ENCODE measurements at regions of chr3 and their contacts with region 1.

Region 1: DNA sequence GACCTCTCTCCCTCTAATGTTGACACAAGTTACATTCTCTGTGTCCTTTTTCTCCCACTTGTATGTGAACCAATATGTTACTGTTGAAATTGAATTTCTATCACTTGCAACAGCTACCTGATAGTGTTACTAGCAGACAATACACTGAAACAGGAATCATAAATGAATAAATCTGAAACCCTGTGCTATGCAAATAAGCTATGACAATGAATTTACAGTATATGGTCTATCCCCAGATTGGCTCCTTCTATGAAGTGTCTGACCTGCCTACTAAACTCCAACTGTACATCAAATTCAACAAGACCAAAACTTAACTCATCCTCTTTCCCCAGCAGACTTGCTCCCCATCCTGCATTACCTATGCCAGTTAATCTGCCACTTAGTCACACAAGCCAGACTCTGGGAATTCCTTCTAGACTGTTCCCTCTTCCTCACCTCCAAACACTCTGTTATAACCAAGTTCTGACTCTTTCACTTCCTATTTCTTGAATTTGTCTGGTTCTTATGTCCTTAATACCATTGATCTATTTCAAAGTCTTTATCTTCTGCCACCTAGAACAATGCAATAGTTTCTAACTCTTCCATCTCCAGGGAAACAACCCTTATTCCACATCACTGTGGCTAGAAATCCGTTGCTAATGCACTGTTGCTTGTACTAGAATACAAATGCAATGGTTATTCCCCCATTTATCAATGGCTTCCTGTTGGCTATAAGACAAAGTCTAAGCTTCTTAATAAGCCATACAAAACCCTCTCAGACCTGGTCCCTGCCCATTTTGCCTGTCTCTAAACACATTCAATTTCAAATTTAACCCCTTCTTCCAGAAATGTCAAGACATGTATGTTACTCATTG is 13.4 kb upstream of the ZNF639 start:
- DNase-seq: no peak
- ATAC-seq: no peak
- H3K4me3 ChIP-seq: no peak overlapping the region
- H3K4me3 Mint-ChIP-seq: no peak overlapping the region
- H3K27ac ChIP-seq: no peak overlapping the region
- H3K27ac Mint-ChIP-seq: no peak overlapping the region
- H3K4me1 ChIP-seq: no peaks in the 10 kb centered on the region
- H3K4me1 Mint-ChIP-seq: no peaks in the 10 kb centered on the region
- H3K27me3 ChIP-seq: no peaks in the 10 kb centered on the region
- H3K27me3 Mint-ChIP-seq: peaks cover 0 to 20% (median 4%) of the 10 kb centered on the region in 5 donors

Region 2: GRCh38 chr3:179224584-179224983 is 84.9 kb before region 1 on chr3:
- CTCF ChIA-PET with region 1: no interaction called
- POLR2A ChIA-PET with region 1: no interaction called
- intact Hi-C with region 1: loop called in 1 of 2 experiments (anchors 10 kb)
- DNase-seq: no peak
- ATAC-seq: no peak
- H3K4me3 ChIP-seq: no peak overlapping the region
- H3K4me3 Mint-ChIP-seq: no peak overlapping the region
- H3K27ac ChIP-seq: no peak overlapping the region
- H3K27ac Mint-ChIP-seq: peak overlapping the region in 3 of 9 donors; percentile 24 to 49 (median 40)
- H3K4me1 ChIP-seq: no peaks in the 10 kb centered on the region
- H3K4me1 Mint-ChIP-seq: peaks cover 0 to 4% (median 0%) of the 10 kb centered on the region in 7 donors
- H3K27me3 ChIP-seq: no peaks in the 10 kb centered on the region
- H3K27me3 Mint-ChIP-seq: no peaks in the 10 kb centered on the region